ENCODE measurements at regions of chr22 and their contacts with region 1.

Region 1: GRCh38 chr22:26124991-26125725 is 44.1 kb upstream of the SEZ6L start:
- DNase-seq: no peak
- CTCF ChIP-seq: no peak

Region 2: GRCh38 chr22:26321469-26321913 is 196.3 kb after region 1 on chr22:
- in situ Hi-C with region 1: loop called (anchors 25 kb)
- DNase-seq: no peak
- CTCF ChIP-seq: no peak

Measured in GM13977 (cell line).